G401 (cell line): ENCODE measurements at regions of chr9 and their contacts with region 1.

Region 1: DNA sequence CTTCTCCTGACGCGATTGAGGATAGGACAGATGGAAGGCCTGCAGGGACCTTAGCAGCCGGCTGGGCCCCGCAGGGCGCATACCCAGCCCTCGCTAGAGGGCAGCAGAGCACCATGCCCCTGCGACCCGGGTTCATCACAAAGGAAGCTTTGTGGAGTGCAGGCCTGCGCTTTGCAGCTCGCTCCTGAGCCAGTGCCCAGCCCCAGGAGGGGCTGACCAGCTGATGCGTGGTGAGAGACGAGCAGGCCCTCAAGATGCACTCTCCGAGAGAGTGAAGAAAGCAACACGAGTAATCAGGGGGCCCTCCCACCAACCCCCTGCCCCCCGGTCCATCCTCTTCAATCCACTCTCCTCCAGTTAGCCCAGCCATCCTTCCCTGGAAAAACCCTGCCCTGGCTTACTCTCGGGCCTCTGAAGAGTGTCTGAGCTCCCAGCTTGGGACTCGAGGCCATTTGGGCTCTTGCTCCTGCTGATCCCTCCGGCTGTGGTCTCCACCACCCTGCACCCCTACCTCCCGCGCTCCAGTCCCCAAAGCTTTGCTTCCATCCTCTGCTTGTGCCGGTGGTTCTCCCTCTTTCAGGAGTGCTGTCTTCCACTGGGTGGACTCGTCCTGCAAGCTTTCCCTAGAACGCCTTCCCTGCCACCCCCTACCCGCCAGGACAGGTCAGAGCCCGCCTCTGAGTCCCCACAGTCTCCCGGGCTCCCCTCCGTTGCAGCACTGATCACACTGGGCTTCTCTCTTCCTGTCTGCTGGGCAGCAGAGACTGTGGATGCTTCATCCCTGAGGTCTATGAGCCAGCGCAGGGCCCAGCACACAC is 9.1 kb upstream of the KIF12 start:
- DNase-seq: peak; percentile 83

Region 2: GRCh38 chr9:114203410-114204140 is 95.3 kb after region 1 on chr9:
- in situ Hi-C with region 1: loop called (anchors 5 kb)
- DNase-seq: no peak